ENCODE measurements at regions of chr20 and their contacts with region 1.

Region 1: DNA sequence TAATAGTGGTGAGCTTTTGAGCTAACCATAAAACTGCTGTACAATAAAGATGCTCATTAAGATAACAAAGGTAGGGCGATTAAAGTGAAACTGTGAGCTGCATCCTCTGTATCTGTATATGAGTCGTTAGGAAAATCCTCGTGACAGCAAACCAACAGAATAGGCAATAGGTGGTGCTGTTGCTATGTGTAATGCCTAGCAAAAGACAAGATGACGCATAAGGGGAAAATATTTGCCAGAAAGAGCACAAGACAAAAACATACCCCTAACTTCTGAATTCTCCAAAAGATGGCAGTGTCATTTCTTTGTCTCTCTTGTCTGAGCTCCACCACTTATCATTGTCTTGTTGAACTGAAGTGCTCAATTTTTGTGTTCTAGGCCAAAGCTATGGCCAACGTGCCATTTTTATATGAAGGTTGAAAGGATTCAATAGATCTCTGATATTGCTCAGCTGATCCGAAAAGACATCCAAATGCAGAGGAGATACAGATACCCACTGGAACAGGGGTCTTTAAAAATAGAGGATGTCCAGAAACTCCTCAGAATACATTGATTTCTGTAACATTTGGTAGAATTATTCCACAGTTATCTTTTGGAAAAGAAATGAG is 56.3 kb upstream of the ANKEF1 start:
- DNase-seq: no peak
- H3K4me3 ChIP-seq: no peak overlapping the region
- H3K27ac ChIP-seq: no peak overlapping the region
- H3K4me1 ChIP-seq: no peaks in the 10 kb centered on the region
- H3K27me3 ChIP-seq: no peaks in the 10 kb centered on the region
- CTCF ChIP-seq: peak in 2 of 3 experiments; percentile 78 to 79; a peak in 3 of 4 replicates
- EP300 ChIP-seq: no peak
- POLR2A ChIP-seq: no peak
- RAD21 ChIP-seq: peak; percentile 96 to 97

Region 2: DNA sequence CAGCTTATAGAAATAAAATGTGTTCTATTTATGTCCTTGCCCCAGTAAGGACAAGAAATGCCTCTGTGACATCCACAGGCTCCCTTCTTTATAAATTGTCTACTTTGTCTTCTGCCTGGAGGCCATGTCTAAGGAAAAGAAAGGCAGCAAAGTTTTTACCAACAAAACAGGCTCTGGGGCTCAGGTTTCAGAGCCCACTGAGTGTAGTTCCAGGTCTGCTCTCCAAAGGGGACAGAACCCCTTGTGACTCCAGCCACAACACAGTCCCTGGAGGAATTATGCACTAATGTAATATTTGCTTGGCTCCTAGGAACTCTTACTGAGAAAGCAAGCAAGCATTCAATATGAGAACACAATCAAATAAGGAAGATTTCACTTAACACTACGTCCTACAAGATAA is 219.7 kb before region 1 on chr20:
- CTCF ChIA-PET with region 1: no interaction called
- POLR2A ChIA-PET with region 1: no interaction called
- DNase-seq: no peak
- H3K4me3 ChIP-seq: no peak overlapping the region
- H3K27ac ChIP-seq: no peak overlapping the region
- H3K4me1 ChIP-seq: peaks cover 0 to 5% (median 2%) of the 10 kb centered on the region in 4 experiments; a peak in 4 of 7 replicates
- H3K27me3 ChIP-seq: no peaks in the 10 kb centered on the region
- CTCF ChIP-seq: no peak
- EP300 ChIP-seq: no peak
- POLR2A ChIP-seq: no peak
- RAD21 ChIP-seq: no peak

Region 3: DNA sequence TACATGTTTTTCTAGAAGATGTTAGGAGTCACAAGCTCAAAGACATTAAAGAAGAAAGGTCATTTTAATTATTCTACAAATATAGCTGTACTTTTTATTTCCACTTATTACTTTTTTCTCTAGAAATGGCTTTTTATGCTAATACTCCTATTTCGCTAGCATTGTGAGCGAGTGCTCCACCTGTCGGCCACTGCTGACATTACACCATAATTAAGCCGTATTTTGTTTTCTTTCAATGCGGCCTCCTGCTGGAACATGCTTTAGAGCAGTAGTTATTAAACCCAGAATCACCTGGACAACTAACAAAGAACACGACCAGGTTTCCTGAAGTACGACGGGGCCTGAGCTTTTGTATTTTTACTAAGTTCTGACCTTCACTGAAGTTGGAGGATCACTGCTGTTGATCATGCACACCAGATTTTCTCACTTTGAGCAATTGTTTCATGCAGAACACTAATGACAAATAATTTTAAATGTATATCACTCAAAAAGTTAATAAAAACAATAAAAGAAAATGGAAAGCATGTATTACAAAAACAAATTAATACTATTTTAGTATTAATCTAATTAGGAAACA is 65.6 kb before region 1 on chr20:
- CTCF ChIA-PET with region 1: interaction called, 10 read pairs
- POLR2A ChIA-PET with region 1: no interaction called
- DNase-seq: peak in 1 of 2 experiments; percentile 72
- H3K4me3 ChIP-seq: no peak overlapping the region
- H3K27ac ChIP-seq: no peak overlapping the region
- H3K4me1 ChIP-seq: no peaks in the 10 kb centered on the region
- H3K27me3 ChIP-seq: no peaks in the 10 kb centered on the region
- CTCF ChIP-seq: peak in 2 of 3 experiments; percentile 70 to 74; a peak in 3 of 4 replicates
- EP300 ChIP-seq: no peak
- POLR2A ChIP-seq: no peak
- RAD21 ChIP-seq: peak; percentile 60 to 62

Region 4: DNA sequence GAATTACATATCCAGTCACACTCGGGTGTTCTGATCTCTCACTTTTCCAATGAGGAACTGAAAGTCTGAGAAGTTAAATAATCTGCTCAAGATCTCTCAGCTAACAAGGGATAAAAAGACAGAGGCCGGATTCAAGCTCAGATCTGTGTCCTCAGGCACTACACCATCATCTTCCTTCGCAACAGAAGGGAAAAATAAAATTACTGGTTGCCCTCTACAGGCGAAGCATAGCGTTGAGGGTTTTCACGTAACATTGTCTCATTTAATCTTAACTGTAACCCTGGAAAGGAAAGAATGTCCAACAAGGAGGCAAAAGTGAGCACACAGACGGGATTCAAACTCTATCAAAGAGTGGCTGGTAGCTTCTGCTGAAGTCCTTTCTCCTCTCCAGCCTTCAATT is 11.5 kb before region 1 on chr20:
- CTCF ChIA-PET with region 1: interaction called, 13 read pairs
- POLR2A ChIA-PET with region 1: no interaction called
- DNase-seq: no peak
- H3K4me3 ChIP-seq: no peak overlapping the region
- H3K27ac ChIP-seq: no peak overlapping the region
- H3K4me1 ChIP-seq: peaks cover 0 to 4% (median 0%) of the 10 kb centered on the region in 4 experiments; a peak in 1 of 7 replicates
- H3K27me3 ChIP-seq: no peaks in the 10 kb centered on the region
- CTCF ChIP-seq: peak in 2 of 3 experiments; percentile 39 to 57; a peak in 2 of 4 replicates
- EP300 ChIP-seq: no peak
- POLR2A ChIP-seq: no peak
- RAD21 ChIP-seq: peak; percentile 41 to 46

Region 5: GRCh38 chr20:10034717-10035571 is 56.4 kb after region 1 on chr20 and contains the start of gene ANKEF1:
- CTCF ChIA-PET with region 1: interaction called, 11 read pairs
- POLR2A ChIA-PET with region 1: interaction called, 3 read pairs
- DNase-seq: peak; percentile 29 to 88
- H3K4me3 ChIP-seq: peak within 1 kb of the TSS; percentile 42 to 73 (median 53)
- H3K27ac ChIP-seq: no peak within 1 kb of the TSS
- H3K4me1 ChIP-seq: peaks cover 0 to 3% (median 1%) of the 10 kb centered on the region in 4 experiments; a peak in 2 of 7 replicates
- H3K27me3 ChIP-seq: no peaks in the 10 kb centered on the region
- CTCF ChIP-seq: 0 out of 4 replicates have a peak, but pooled peaks of 1 of the 3 experiments have one; percentile 8
- EP300 ChIP-seq: peak in 1 of 2 experiments; percentile 11; a peak in 1 of 3 replicates
- POLR2A ChIP-seq: peak in 1 of 2 experiments; percentile 75; a peak in 2 of 3 replicates
- RAD21 ChIP-seq: peak in 1 of 2 experiments; percentile 17; a peak in 1 of 4 replicates
- total RNA-seq, gene ANKEF1: 9.8 and 10.0 TPM in 2 replicates

Region 6: GRCh38 chr20:10427060-10427692 is 448.7 kb after region 1 on chr20:
- CTCF ChIA-PET with region 1: interaction called, 15 read pairs
- POLR2A ChIA-PET with region 1: no interaction called
- DNase-seq: no peak
- H3K4me3 ChIP-seq: no peak overlapping the region
- H3K27ac ChIP-seq: no peak overlapping the region
- H3K4me1 ChIP-seq: no peaks in the 10 kb centered on the region
- H3K27me3 ChIP-seq: no peaks in the 10 kb centered on the region
- CTCF ChIP-seq: peak in 2 of 3 experiments; percentile 59 to 68; a peak in 3 of 4 replicates
- EP300 ChIP-seq: no peak
- POLR2A ChIP-seq: no peak
- RAD21 ChIP-seq: peak; percentile 63 to 68

Measured in H1 (cell line).